Right cardiac atrium (tissue), 5 donors: ENCODE measurements at regions of chr12 and their contacts with region 1.

Region 1: GRCh38 chr12:122951979-122952892 is 14.0 kb downstream of the ABCB9 start:
- DNase-seq: peak; percentile 74 to 90 (median 86)
- ATAC-seq: peak; percentile 91
- H3K4me3 ChIP-seq: no peak overlapping the region
- H3K27ac ChIP-seq: no peak overlapping the region
- H3K4me1 ChIP-seq: no peaks in the 10 kb centered on the region
- H3K27me3 ChIP-seq: no peaks in the 10 kb centered on the region

Region 2: DNA sequence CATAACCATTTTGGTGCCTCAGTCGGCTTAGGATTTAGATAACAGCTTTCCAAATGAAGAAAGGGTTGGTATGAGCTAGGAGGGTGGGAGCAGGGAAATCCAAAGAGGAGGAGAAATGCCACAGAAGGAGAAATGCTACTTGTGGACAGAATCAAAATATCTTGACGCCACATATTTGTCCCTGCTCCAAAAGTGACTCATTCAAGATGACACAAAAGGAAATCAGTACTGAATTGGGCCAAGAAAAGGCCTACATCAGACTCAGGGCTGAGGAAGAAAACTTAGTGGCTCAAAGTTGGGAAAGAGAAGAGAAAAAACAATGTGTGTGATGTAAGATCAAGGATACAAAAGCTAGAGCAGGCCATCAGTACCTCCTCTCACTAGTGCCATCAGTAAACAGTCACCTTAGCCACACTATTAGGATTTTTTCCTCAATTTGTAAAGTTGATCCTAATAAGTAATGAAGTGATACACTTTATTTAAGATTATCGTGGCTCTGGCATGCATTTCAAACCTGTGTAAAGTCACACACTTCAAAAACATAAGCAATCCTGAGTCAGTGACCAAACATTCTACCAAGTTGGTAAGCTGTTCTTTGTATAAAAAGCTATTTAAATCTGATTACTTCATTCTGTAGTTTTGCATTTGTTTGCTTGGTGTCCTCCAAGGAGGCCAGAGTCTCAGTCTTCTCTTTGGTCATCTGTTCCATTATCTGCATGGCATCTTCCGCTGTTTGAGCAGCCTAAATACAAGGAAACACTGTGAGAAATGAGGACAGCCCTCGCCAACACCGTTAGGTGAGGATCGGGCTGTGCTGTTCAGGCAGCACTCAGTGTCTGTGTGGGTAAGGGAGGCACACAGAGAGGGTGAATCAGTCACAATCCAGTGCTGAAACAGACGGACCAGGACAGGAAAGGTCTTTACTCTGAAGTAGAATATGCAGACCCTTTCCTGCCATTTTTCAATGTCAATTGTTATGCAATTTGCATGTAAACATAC is 633.3 kb before region 1 on chr12:
- intact Hi-C with region 1: no loop called
- DNase-seq: no peak
- ATAC-seq: peak; percentile 91
- H3K4me3 ChIP-seq: no peak overlapping the region
- H3K27ac ChIP-seq: peak overlapping the region; percentile 10
- H3K4me1 ChIP-seq: no peaks in the 10 kb centered on the region
- H3K27me3 ChIP-seq: no peaks in the 10 kb centered on the region

Region 3: GRCh38 chr12:122793685-122794106 is 158.5 kb before region 1 on chr12:
- intact Hi-C with region 1: loop called (anchors 5 to 10 kb)
- DNase-seq: no peak
- ATAC-seq: peak; percentile 33 to 55
- H3K4me3 ChIP-seq: no peak overlapping the region
- H3K27ac ChIP-seq: no peak overlapping the region
- H3K4me1 ChIP-seq: no peaks in the 10 kb centered on the region
- H3K27me3 ChIP-seq: no peaks in the 10 kb centered on the region

Region 4: DNA sequence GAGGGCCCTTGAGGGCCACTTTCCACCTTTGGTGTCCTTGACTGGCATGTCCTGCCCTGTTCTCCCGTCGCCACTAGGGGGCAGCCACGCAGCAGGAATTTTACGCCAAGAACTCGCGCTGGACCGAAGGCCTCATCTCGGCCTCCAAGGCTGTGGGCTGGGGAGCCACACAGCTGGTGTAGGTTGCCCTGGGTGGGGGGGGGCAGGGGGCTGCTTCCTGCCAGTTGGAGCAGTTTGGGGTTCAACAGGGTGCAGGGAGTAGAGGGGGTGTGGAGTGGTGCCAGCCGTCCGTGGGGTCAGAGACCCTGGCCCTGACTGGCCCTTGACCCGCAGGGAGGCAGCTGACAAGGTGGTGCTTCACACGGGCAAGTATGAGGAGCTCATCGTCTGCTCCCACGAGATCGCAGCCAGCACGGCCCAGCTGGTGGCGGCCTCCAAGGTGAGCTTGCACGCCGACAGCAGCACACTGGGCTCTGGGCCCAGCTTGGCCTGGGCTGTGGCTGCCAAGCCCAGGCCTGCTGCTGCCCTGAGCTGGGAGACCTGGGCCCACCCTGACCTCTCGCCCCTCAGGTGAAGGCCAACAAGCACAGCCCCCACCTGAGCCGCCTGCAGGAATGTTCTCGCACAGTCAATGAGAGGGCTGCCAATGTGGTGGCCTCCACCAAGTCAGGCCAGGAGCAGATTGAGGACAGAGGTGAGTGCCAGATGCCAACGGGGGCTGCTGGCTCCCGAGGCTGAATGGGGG is 91.7 kb before region 1 on chr12:
- intact Hi-C with region 1: loop called (anchors 1 to 5 kb)
- DNase-seq: peak; percentile 88 to 94 (median 94)
- ATAC-seq: peak; percentile 65 to 76
- H3K4me3 ChIP-seq: no peak overlapping the region
- H3K27ac ChIP-seq: no peak overlapping the region
- H3K4me1 ChIP-seq: no peaks in the 10 kb centered on the region
- H3K27me3 ChIP-seq: no peaks in the 10 kb centered on the region